ENCODE measurements at regions of chr3 and their contacts with region 1.

Region 1: DNA sequence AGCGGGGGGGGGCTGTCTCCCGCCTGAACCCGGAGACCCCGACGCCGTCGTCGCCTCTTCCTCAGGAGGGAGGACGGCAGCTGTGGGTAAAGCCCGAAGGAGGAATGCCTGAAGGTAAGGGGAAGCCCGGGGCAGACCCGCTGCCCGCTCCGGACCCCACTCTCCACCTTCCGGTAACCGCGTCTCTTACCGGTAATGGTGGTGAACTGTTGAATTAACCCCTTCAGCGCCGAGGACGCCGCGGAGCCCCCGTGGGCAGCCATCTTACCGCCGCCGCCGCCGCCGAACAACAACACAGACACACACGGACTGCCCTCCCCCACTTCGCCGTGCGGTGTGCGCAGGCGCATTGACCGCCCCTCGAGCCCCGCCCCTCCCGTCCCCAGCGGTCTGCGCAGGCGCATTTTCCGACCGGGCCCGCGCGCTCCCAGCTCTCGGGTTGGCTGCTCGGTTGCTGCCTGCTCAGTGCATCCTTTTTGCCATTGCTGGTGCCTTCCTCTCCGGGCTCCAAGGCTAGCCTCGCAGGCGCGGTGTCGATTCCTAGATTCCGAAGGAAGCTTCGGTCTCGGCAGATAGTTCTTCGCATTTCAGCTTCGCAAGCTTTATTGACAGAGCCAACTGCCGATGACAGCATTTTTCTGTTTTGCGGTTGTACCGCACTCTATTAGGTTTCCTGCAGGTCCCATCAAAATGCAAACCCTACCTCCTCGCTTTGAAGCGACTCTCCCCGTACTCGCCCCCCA is at the start of gene UBXN7:
- DNase-seq: peak; percentile 92 to 99 (median 97)
- ATAC-seq: peak; percentile 85
- H3K4me3 ChIP-seq: peak within 1 kb of the TSS; percentile 98
- H3K4me3 Mint-ChIP-seq: peak within 1 kb of the TSS; percentile 84
- H3K27ac ChIP-seq: peak within 1 kb of the TSS; percentile 83 to 87
- H3K27ac Mint-ChIP-seq: peak within 1 kb of the TSS; percentile 96
- H3K4me1 ChIP-seq: peaks cover 17% of the 10 kb centered on the region
- H3K4me1 Mint-ChIP-seq: peaks cover 22% of the 10 kb centered on the region
- H3K27me3 ChIP-seq: no peaks in the 10 kb centered on the region
- H3K27me3 Mint-ChIP-seq: no peaks in the 10 kb centered on the region
- CTCF ChIP-seq: no peak
- total RNA-seq, gene UBXN7: 75.3 to 83.6 TPM

Region 2: DNA sequence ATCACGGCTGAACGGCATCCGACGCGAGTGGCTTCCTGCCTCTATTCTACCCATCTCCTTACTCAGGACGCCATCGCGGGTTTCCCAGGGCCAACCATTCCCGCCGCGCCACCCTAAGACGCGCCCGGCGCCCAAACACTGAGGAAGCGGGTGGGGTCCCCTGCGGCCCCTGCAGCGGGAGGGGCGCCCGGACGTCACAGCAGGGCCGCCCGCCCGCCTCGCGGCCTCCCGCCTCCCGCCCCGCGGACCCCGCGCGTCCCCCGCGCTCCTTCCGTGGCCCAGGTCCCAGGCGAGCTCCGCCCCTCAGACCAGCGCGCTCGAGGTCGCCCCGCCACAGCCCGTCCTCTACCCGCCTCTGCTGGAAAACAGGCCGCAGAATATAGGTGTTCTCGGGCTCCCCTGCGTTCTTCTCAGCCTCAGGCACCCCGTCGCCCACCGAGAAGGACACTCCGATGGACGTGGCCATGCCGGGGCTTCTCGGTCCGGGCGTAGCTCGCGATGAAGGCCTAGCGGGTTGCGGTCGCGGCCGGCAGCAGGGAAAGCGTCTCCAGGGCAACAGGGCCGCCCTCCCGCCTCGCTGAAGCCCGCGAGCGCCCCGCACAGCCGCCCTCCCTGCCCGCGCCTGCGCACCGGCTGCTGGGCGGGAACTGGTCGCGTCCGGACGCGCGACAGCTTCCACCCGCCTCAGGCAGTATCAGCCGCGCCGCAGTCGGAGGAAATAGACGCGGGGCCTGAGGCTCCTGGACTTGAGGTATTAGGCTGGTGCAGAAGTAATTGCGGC is 114.4 kb before region 1 on chr3 and contains the start of gene DYNLT2B:
- CTCF ChIA-PET with region 1: no interaction called
- POLR2A ChIA-PET with region 1: interaction called, 20 read pairs
- intact Hi-C with region 1: loop called in 1 of 2 experiments (anchors 5 kb)
- DNase-seq: peak; percentile 67 to 96 (median 83)
- ATAC-seq: peak; percentile 89
- H3K4me3 ChIP-seq: peak within 1 kb of the TSS; percentile 82
- H3K4me3 Mint-ChIP-seq: peak within 1 kb of the TSS; percentile 97
- H3K27ac ChIP-seq: peak within 1 kb of the TSS; percentile 83 to 91
- H3K27ac Mint-ChIP-seq: peak within 1 kb of the TSS; percentile 96
- H3K4me1 ChIP-seq: peaks cover 20% of the 10 kb centered on the region
- H3K4me1 Mint-ChIP-seq: peaks cover 5% of the 10 kb centered on the region
- H3K27me3 ChIP-seq: no peaks in the 10 kb centered on the region
- H3K27me3 Mint-ChIP-seq: no peaks in the 10 kb centered on the region
- CTCF ChIP-seq: no peak
- total RNA-seq, gene DYNLT2B: 4.5 to 4.6 TPM

Region 3: DNA sequence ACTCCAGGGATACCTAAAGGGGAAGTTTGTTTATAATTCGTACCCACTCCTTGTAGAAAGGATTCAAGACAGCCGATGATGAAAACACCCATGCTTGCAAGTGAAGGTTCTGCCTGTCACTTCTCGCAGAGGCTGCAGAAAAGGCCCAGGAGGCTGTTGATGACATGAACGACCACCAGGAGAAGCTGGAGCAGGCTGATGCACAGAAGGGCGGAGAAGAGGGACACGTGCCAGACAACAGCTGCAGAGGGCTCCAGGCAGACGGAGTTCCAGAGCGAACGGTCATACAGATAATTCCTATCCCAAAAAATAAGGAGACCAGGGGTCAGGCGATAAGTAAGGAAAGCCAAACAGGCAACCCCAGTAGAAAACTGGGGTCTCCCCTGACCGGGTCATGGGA is 108.6 kb before region 1 on chr3:
- CTCF ChIA-PET with region 1: no interaction called
- POLR2A ChIA-PET with region 1: interaction called, 20 read pairs
- intact Hi-C with region 1: loop called in 1 of 2 experiments (anchors 5 kb)
- DNase-seq: no peak
- ATAC-seq: no peak
- H3K4me3 ChIP-seq: no peak overlapping the region
- H3K4me3 Mint-ChIP-seq: no peak overlapping the region
- H3K27ac ChIP-seq: no peak overlapping the region
- H3K27ac Mint-ChIP-seq: no peak overlapping the region
- H3K4me1 ChIP-seq: peaks cover 7% of the 10 kb centered on the region
- H3K4me1 Mint-ChIP-seq: no peaks in the 10 kb centered on the region
- H3K27me3 ChIP-seq: peaks cover 0 to 2% of the 10 kb centered on the region in 2 experiments
- H3K27me3 Mint-ChIP-seq: no peaks in the 10 kb centered on the region
- CTCF ChIP-seq: peak; percentile 14

Region 4: GRCh38 chr3:196502775-196503195 is 70.5 kb after region 1 on chr3:
- CTCF ChIA-PET with region 1: no interaction called
- POLR2A ChIA-PET with region 1: interaction called, 29 read pairs
- intact Hi-C with region 1: loop called (anchors 2 kb)
- DNase-seq: peak; percentile 36 to 88 (median 51)
- ATAC-seq: peak; percentile 62
- H3K4me3 ChIP-seq: peak overlapping the region; percentile 100
- H3K4me3 Mint-ChIP-seq: peak overlapping the region; percentile 99
- H3K27ac ChIP-seq: peak overlapping the region; percentile 85 to 86
- H3K27ac Mint-ChIP-seq: peak overlapping the region; percentile 96
- H3K4me1 ChIP-seq: peaks cover 29% of the 10 kb centered on the region
- H3K4me1 Mint-ChIP-seq: peaks cover 45% of the 10 kb centered on the region
- H3K27me3 ChIP-seq: no peaks in the 10 kb centered on the region
- H3K27me3 Mint-ChIP-seq: no peaks in the 10 kb centered on the region
- CTCF ChIP-seq: no peak

Measured in CD4-positive, alpha-beta T cell (primary cell).